ENCODE measurements at regions of chr19 and their contacts with region 1.

Region 1: DNA sequence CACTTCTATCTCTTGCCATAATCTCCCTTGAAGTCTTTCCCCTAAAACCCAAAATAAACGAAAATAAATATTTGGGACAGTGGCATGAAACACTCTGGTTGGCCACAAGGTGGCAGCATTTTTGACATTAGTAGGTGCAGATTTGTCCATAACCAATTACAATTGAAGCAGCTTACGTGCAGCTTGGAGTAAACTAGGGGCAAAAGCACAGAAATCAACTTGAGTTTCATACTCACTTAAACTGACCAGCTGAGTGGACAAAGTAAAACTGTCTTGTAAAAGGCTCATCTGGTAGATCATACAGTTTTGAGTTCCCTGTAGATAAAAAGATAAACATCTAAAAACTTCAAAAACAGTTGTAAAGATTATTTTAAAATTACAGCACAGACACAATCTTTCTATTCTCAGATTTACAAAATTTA is 18.8 kb downstream of the PDCD5 start:
- DNase-seq: peak; percentile 77 to 85
- ATAC-seq: peak; percentile 61 to 76; a peak in 5 of 6 replicates
- H3K4me3 ChIP-seq: no peak overlapping the region
- H3K27ac ChIP-seq: no peak overlapping the region
- H3K4me1 ChIP-seq: no peaks in the 10 kb centered on the region
- CTCF ChIP-seq: peak; percentile 99
- EP300 ChIP-seq: no peak
- POLR2A ChIP-seq: no peak
- RAD21 ChIP-seq: peak; percentile 74 to 78

Region 2: DNA sequence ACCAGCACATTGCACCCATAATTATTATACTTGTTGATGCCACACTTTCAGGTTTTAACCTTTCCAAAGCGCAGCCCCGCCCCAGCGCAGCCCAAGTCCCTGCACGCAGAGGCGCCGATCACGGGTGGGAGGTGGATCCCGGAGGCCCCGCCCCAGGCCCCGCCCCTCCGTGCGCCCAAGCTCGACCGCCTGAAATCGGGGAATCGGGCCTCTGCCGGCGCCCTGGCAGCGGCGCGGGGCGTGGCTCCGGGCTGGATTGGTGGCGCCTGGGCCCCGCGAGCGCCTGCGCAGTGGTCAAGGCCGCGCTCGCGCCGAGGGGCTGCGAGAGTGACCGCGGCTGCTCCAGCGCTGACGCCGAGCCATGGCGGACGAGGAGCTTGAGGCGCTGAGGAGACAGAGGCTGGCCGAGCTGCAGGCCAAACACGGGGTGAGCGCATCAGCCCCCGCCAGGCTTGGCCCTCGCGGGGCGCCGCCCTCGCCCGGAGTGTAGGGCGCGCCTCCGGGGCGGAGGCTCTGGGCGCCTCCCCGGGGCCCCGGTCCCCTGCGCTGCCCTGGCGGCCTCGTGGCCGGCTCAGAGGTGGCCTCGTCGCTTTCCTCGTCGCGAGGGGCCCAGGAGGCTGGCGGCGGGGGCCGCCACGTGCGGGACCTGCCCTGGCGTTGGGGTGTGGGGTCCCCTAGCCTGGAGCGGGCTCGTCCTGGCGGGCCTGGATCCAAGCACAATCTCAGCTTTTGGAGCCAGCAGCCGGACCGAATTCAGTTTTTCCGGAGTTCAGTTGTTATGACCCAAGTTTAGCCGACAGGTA is 18.6 kb before region 1 on chr19 and contains the start of gene PDCD5:
- CTCF ChIA-PET with region 1: interaction called, 76 read pairs
- POLR2A ChIA-PET with region 1: no interaction called
- DNase-seq: peak; percentile 98
- ATAC-seq: peak; percentile 86 to 94
- H3K4me3 ChIP-seq: peak within 1 kb of the TSS; percentile 94
- H3K27ac ChIP-seq: peak within 1 kb of the TSS; percentile 91 to 93
- H3K4me1 ChIP-seq: peaks cover 16% of the 10 kb centered on the region
- CTCF ChIP-seq: no peak
- EP300 ChIP-seq: no peak
- POLR2A ChIP-seq: peak; percentile 98
- RAD21 ChIP-seq: no peak
- polyA plus RNA-seq, gene PDCD5: 196 and 445 TPM in 2 replicates

Region 3: GRCh38 chr19:32611161-32611560 is 11.4 kb after region 1 on chr19:
- CTCF ChIA-PET with region 1: interaction called, 88 read pairs
- POLR2A ChIA-PET with region 1: no interaction called
- DNase-seq: no peak
- ATAC-seq: no peak
- H3K4me3 ChIP-seq: no peak overlapping the region
- H3K27ac ChIP-seq: no peak overlapping the region
- H3K4me1 ChIP-seq: no peaks in the 10 kb centered on the region
- CTCF ChIP-seq: no peak
- EP300 ChIP-seq: no peak
- POLR2A ChIP-seq: no peak
- RAD21 ChIP-seq: no peak

Region 4: GRCh38 chr19:32638625-32639024 is 38.9 kb after region 1 on chr19:
- CTCF ChIA-PET with region 1: interaction called, 21 read pairs
- POLR2A ChIA-PET with region 1: no interaction called
- DNase-seq: no peak
- ATAC-seq: no peak; a peak in 1 of 6 replicates
- H3K4me3 ChIP-seq: no peak overlapping the region
- H3K27ac ChIP-seq: no peak overlapping the region
- H3K4me1 ChIP-seq: no peaks in the 10 kb centered on the region
- CTCF ChIP-seq: no peak
- EP300 ChIP-seq: no peak
- POLR2A ChIP-seq: no peak
- RAD21 ChIP-seq: no peak

Region 5: DNA sequence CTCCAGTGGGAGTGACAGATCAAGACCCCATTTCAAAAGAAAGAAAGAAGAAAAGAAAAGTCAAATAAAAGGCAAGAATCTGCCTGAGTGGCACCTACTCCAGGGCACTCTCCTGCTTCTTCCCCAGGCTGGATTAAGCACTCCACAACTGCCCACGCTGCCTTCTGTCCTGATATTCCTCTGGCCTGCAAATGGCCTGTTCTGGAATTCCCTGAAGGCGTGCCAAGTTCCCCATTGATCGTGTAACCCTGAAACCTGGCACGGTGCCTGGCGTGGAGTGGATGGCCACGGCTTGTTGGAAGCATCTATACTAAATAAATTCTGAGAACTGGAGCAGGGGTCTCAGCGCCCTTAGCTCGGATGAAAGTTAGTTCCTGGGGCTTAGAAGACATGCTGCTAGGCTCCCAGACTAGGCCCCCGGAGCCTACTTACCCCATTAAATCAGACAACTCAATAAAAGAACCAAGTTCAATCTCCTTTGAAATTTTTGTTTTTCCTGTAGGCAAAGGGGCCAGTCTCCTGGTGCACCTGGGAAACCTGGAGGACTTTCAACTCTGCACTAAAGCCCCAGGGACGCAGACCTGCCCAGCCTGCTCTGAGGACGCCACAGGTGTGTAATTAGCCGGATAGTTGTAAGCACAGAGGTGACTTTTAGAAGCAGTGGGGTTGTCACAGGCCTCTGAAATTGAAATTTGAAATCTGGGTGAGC is 53.3 kb after region 1 on chr19:
- CTCF ChIA-PET with region 1: interaction called, 10 read pairs
- POLR2A ChIA-PET with region 1: no interaction called
- DNase-seq: no peak
- ATAC-seq: no peak
- H3K4me3 ChIP-seq: no peak overlapping the region
- H3K27ac ChIP-seq: no peak overlapping the region
- H3K4me1 ChIP-seq: no peaks in the 10 kb centered on the region
- CTCF ChIP-seq: no peak
- EP300 ChIP-seq: no peak
- POLR2A ChIP-seq: no peak
- RAD21 ChIP-seq: no peak

Measured in A549 (cell line).